Calu3 (cell line): ENCODE measurements at regions of chr1 and their contacts with region 1.

Region 1: DNA sequence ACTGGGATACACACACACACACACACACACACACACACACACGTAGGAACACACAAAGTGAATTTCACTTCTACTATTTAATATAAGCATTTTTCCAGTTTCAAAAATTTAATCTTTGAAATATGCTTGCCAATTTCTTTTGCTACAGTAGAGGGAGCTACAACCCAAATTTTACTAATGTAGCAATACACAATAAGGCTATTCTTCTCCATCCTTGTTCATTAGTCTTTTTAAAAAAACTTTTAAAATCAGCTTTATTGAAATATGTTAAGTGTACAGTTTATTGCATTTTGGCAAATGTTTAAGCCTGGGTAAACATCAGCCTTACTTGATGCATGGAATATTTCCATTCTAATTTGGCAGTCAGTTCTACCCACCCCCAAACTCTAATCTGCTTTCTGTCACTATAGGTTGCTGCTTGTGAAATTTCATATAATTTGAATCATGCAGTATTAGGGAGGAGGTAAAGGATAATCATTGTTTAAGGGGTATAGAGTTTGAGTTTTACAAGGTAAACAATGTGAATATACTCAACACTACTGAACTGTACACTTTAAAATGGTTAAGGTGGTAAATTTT is 93.0 kb upstream of the TENT5C start:
- DNase-seq: no peak
- H3K4me3 Mint-ChIP-seq: no peak overlapping the region
- H3K27ac Mint-ChIP-seq: no peak overlapping the region
- H3K4me1 Mint-ChIP-seq: no peaks in the 10 kb centered on the region
- H3K27me3 Mint-ChIP-seq: no peaks in the 10 kb centered on the region
- CTCF ChIP-seq: no peak

Region 2: DNA sequence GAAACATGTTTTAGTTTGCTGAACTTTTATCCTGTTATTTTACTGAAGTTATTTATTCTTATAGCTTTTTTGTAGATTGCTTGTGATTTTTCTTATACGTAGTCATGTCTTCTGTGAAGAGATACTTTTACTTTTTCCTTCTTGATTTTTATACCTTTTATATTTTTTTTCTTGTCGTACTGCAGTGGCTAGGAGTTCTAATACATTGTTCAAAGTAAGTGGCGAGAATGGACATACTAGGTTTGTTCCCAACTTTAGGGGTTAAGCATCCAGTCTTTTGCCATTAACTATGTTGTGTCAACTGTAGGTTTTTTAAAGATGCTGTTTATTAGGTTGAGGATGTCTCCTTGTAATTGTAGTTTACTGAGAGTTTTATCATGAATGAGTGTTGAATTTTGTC is 109.2 kb before region 1 on chr1:
- CTCF ChIA-PET with region 1: no interaction called
- intact Hi-C with region 1: no loop called
- DNase-seq: no peak
- H3K4me3 Mint-ChIP-seq: no peak overlapping the region
- H3K27ac Mint-ChIP-seq: no peak overlapping the region
- H3K4me1 Mint-ChIP-seq: no peaks in the 10 kb centered on the region
- H3K27me3 Mint-ChIP-seq: no peaks in the 10 kb centered on the region
- CTCF ChIP-seq: no peak

Region 3: GRCh38 chr1:117758444-117759316 is 245.8 kb after region 1 on chr1:
- CTCF ChIA-PET with region 1: interaction called, 6 read pairs
- intact Hi-C with region 1: loop called (anchors 1 kb)
- DNase-seq: peak; percentile 63
- H3K4me3 Mint-ChIP-seq: peak overlapping the region; percentile 65
- H3K27ac Mint-ChIP-seq: no peak overlapping the region
- H3K4me1 Mint-ChIP-seq: no peaks in the 10 kb centered on the region
- H3K27me3 Mint-ChIP-seq: peaks cover 24% of the 10 kb centered on the region
- CTCF ChIP-seq: peak; percentile 60